AG04450 (cell line): ENCODE measurements at regions of chr17 and their contacts with region 1.

Region 1: GRCh38 chr17:67959288-67959900 is 36.9 kb downstream of the C17orf58 start:
- DNase-seq: no peak
- H3K4me3 ChIP-seq: no peak overlapping the region
- H3K27ac ChIP-seq: no peak overlapping the region
- H3K27me3 ChIP-seq: no peaks in the 10 kb centered on the region
- CTCF ChIP-seq: no peak

Region 2: GRCh38 chr17:67358612-67359011 is 600.8 kb before region 1 on chr17:
- CTCF ChIA-PET with region 1: interaction called, 12 read pairs
- POLR2A ChIA-PET with region 1: no interaction called
- DNase-seq: no peak
- H3K4me3 ChIP-seq: no peak overlapping the region
- H3K27ac ChIP-seq: no peak overlapping the region
- H3K27me3 ChIP-seq: no peaks in the 10 kb centered on the region
- CTCF ChIP-seq: no peak